ENCODE measurements at regions of chr4 and their contacts with region 1.

Region 1: DNA sequence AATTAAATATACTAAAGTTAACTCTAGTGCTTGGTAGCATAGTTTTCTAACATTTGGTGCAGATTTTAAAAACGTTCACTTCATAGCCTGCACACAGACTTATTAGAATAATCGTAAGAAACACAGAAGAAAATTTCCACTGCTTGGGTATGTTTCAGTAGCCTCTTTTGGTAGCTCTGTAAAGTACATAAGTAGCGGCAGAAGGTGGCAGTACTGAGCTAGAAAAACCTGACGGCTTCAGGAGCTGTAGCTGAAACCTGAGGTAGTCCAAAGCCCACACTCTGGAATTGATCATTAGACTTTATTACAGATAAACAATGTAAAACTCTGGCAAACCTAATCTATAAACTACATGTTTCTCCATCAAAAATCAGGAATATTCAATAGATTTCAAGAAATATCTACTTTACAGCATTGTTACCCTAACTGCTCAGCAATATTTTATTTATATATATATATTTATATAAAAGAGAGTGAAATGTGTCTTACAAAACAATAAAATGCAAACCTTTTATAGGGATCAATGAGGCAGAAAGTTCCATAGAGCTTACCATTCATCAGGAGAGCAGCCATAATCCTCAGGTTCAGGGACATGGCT is 88.2 kb downstream of the ATP8A1 start:
- DNase-seq: no peak
- ATAC-seq: peak; percentile 95
- H3K4me3 Mint-ChIP-seq: no peak overlapping the region
- H3K27ac Mint-ChIP-seq: no peak overlapping the region
- H3K4me1 Mint-ChIP-seq: no peaks in the 10 kb centered on the region
- H3K27me3 Mint-ChIP-seq: no peaks in the 10 kb centered on the region
- CTCF ChIP-seq: no peak

Region 2: DNA sequence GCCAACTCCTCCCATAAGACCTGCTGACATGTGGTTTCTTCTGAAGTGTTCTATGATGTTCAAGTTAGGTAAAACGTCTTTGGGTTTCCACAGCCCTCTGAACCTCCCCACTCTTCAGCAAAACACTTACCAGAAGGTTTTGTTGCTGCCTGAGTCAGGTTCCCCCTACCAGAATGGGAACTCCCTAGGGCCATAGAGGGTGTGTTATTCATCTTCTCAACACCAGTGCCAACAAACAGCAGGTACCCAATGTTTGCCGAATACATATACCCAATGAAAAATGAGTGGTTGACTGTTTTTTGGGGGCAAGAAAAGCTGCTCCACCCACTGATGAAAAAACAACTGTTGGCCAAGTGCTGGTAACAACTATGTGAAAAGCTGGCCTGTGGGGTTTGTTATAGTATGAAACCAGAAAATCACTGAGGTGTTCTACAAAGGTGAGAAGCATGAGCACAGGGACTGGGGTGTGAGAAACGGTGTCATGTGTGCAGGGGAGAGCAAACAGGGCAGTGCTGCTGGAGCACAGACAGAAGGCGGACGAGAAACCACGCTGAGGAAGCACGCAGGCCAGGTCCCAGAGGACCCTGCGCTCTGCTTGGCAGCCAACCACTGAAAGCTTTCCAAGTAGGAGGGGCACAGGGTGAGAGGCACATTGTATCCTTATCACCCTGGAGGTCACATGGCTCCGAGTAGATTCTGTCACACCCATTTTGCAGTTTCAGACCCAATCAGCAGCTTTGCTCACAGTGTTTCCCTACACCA is 59.4 kb after region 1 on chr4:
- CTCF ChIA-PET with region 1: no interaction called
- POLR2A ChIA-PET with region 1: no interaction called
- intact Hi-C with region 1: loop called (anchors 2 kb)
- DNase-seq: peak; percentile 57
- ATAC-seq: peak; percentile 91
- H3K4me3 Mint-ChIP-seq: peak overlapping the region; percentile 74
- H3K27ac Mint-ChIP-seq: peak overlapping the region; percentile 95
- H3K4me1 Mint-ChIP-seq: peaks cover 90% of the 10 kb centered on the region
- H3K27me3 Mint-ChIP-seq: no peaks in the 10 kb centered on the region
- CTCF ChIP-seq: no peak

Region 3: GRCh38 chr4:42750091-42750490 is 181.4 kb after region 1 on chr4:
- CTCF ChIA-PET with region 1: interaction called, 13 read pairs
- POLR2A ChIA-PET with region 1: no interaction called
- intact Hi-C with region 1: loop called (anchors 1 kb)
- DNase-seq: no peak
- ATAC-seq: peak; percentile 60
- H3K4me3 Mint-ChIP-seq: no peak overlapping the region
- H3K27ac Mint-ChIP-seq: no peak overlapping the region
- H3K4me1 Mint-ChIP-seq: no peaks in the 10 kb centered on the region
- H3K27me3 Mint-ChIP-seq: no peaks in the 10 kb centered on the region
- CTCF ChIP-seq: no peak

Region 4: GRCh38 chr4:42768125-42768748 is 199.5 kb after region 1 on chr4:
- CTCF ChIA-PET with region 1: interaction called, 51 read pairs
- POLR2A ChIA-PET with region 1: no interaction called
- intact Hi-C with region 1: loop called (anchors 1 kb)
- DNase-seq: no peak
- ATAC-seq: no peak
- H3K4me3 Mint-ChIP-seq: no peak overlapping the region
- H3K27ac Mint-ChIP-seq: no peak overlapping the region
- H3K4me1 Mint-ChIP-seq: no peaks in the 10 kb centered on the region
- H3K27me3 Mint-ChIP-seq: no peaks in the 10 kb centered on the region
- CTCF ChIP-seq: no peak

Region 5: GRCh38 chr4:42816189-42816879 is 247.6 kb after region 1 on chr4:
- CTCF ChIA-PET with region 1: interaction called, 17 read pairs
- POLR2A ChIA-PET with region 1: no interaction called
- intact Hi-C with region 1: loop called (anchors 1 kb)
- DNase-seq: no peak
- ATAC-seq: no peak
- H3K4me3 Mint-ChIP-seq: no peak overlapping the region
- H3K27ac Mint-ChIP-seq: no peak overlapping the region
- H3K4me1 Mint-ChIP-seq: peaks cover 13% of the 10 kb centered on the region
- H3K27me3 Mint-ChIP-seq: peaks cover 10% of the 10 kb centered on the region
- CTCF ChIP-seq: no peak

Region 6: DNA sequence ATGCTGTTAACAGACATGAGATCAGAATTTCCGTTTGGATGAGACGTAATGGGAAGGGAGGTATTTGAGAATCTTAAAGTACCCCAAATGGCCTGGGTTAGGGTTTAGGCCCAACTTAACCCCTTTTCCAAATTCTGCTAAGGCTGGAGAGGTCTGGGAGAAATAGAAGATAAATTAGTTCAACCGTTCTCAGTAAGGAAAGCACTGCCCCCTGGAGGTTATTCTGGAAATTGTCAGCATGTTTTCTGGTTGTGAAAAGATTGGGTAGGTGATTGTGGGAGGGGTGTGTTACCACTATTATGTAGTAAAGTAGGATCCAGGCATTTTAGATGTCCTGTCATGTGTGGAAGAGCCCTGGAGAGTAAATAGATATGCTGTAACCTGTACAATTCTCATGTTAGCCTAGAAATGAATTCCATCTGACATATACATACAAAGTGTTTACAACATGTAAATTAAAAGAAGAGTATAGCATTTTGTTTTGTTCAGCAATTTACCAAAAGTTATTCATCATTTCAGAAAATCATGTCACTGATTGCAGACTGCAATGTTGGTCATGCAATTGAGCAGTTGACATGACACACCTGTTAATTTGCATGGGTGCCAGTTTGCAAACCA is 297.0 kb after region 1 on chr4:
- CTCF ChIA-PET with region 1: interaction called, 50 read pairs
- POLR2A ChIA-PET with region 1: no interaction called
- intact Hi-C with region 1: loop called (anchors 1 kb)
- DNase-seq: no peak
- ATAC-seq: no peak
- H3K4me3 Mint-ChIP-seq: no peak overlapping the region
- H3K27ac Mint-ChIP-seq: no peak overlapping the region
- H3K4me1 Mint-ChIP-seq: no peaks in the 10 kb centered on the region
- H3K27me3 Mint-ChIP-seq: peaks cover 14% of the 10 kb centered on the region
- CTCF ChIP-seq: peak; percentile 88